Activated B cell treated with CpG ODN at 0.5 μM for 24 hours (primary cell): ENCODE measurements at regions of chr5 and their contacts with region 1.

Region 1: DNA sequence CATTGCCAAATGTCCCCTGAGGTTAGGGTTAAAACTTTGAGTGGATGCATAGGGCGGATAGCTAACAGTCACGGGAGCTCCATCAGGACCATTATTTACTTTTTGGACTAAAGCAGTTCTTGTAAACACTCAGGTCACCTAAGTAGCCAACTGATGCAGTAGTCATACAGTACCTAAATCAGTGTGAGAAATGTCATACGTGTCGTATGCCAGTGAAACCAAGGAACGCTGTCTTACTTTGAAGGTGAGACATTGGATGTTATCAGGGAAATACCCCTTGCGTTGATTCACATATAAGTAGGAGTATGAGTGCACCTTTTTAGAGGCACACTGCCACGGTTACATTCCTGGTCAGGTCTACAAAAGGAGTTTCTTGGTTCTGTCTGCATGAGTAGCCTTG is 101.9 kb downstream of the LNPEP start:
- DNase-seq: no peak
- ATAC-seq: no peak
- H3K4me3 Mint-ChIP-seq: no peak overlapping the region
- H3K27ac Mint-ChIP-seq: no peak overlapping the region
- H3K4me1 Mint-ChIP-seq: no peaks in the 10 kb centered on the region
- H3K27me3 Mint-ChIP-seq: no peaks in the 10 kb centered on the region
- CTCF ChIP-seq: no peak

Region 2: GRCh38 chr5:97094579-97095317 is 56.9 kb after region 1 on chr5:
- CTCF ChIA-PET with region 1: no interaction called
- POLR2A ChIA-PET with region 1: no interaction called
- intact Hi-C with region 1: loop called (anchors 5 kb)
- DNase-seq: no peak
- ATAC-seq: peak; percentile 54
- H3K4me3 Mint-ChIP-seq: no peak overlapping the region
- H3K27ac Mint-ChIP-seq: no peak overlapping the region
- H3K4me1 Mint-ChIP-seq: peaks cover 7% of the 10 kb centered on the region
- H3K27me3 Mint-ChIP-seq: no peaks in the 10 kb centered on the region
- CTCF ChIP-seq: no peak